Activated T-helper 2 cell treated with anti-CD3 and anti-CD28 coated beads, Interferon-gamma antibody, Interleukin-2, Interleukin-4, amounts not matched to agents 10 μg/mL and 5 μg/mL and 100 μg/mL, durations not matched to agents 14 hours and 24 hours and 36 hours (primary cell): ENCODE measurements at regions of chr9 and their contacts with region 1.

Region 1: GRCh38 chr9:77456829-77457437 is 191.2 kb downstream of the GNA14 start:
- DNase-seq: peak; percentile 73
- H3K4me3 Mint-ChIP-seq: no peak overlapping the region
- H3K27ac Mint-ChIP-seq: no peak overlapping the region
- H3K4me1 Mint-ChIP-seq: peaks cover 17% of the 10 kb centered on the region
- H3K27me3 Mint-ChIP-seq: no peaks in the 10 kb centered on the region

Region 2: GRCh38 chr9:77427256-77427927 is 29.5 kb before region 1 on chr9:
- intact Hi-C with region 1: no loop called
- DNase-seq: no peak
- H3K4me3 Mint-ChIP-seq: no peak overlapping the region
- H3K27ac Mint-ChIP-seq: no peak overlapping the region
- H3K4me1 Mint-ChIP-seq: no peaks in the 10 kb centered on the region
- H3K27me3 Mint-ChIP-seq: no peaks in the 10 kb centered on the region

Region 3: DNA sequence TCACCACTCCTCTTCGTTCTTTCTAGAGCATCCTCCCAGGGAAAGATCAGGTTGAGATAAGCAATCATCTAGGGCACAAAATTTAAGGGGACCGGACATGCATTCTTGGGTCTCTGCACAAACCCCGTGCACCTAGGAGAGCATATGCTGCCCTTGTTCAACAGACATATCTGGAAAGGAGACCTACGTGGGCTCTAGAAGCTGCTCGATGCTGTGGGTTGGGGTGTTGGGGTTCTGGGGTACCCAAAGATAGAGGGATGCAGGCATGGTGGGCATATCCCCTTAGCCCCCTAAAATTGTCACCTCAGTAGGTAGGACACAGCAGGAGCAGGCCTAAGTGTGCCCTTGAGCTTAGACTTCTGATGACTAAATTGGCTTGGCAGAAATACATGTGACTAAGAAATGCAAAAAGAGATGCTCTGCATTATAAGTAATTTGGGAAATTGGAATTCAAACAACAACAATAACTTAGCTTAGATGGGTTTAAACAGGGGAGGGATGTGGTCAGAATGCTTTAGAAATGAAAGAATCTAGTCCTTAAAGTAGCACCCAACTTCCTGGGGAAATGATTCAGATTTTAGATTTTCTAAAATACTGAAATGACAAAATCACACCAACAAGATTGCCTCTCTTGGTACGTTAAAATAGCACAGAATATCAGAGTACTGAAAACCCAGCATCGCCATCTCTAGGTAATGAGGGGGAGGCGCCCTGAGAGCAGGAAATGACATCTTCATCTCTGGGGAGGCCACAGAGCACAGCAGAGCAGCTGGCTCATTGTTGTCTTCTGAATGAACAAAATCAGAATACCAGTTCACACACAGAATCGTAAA is 18.9 kb after region 1 on chr9:
- intact Hi-C with region 1: loop called (anchors 1 kb)
- DNase-seq: peak; percentile 63
- H3K4me3 Mint-ChIP-seq: peak overlapping the region; percentile 49
- H3K27ac Mint-ChIP-seq: peak overlapping the region; percentile 97
- H3K4me1 Mint-ChIP-seq: peaks cover 36% of the 10 kb centered on the region
- H3K27me3 Mint-ChIP-seq: no peaks in the 10 kb centered on the region

Region 4: GRCh38 chr9:77521091-77521490 is 64.2 kb after region 1 on chr9:
- intact Hi-C with region 1: no loop called
- DNase-seq: no peak
- H3K4me3 Mint-ChIP-seq: no peak overlapping the region
- H3K27ac Mint-ChIP-seq: no peak overlapping the region
- H3K4me1 Mint-ChIP-seq: no peaks in the 10 kb centered on the region
- H3K27me3 Mint-ChIP-seq: no peaks in the 10 kb centered on the region

Region 5: DNA sequence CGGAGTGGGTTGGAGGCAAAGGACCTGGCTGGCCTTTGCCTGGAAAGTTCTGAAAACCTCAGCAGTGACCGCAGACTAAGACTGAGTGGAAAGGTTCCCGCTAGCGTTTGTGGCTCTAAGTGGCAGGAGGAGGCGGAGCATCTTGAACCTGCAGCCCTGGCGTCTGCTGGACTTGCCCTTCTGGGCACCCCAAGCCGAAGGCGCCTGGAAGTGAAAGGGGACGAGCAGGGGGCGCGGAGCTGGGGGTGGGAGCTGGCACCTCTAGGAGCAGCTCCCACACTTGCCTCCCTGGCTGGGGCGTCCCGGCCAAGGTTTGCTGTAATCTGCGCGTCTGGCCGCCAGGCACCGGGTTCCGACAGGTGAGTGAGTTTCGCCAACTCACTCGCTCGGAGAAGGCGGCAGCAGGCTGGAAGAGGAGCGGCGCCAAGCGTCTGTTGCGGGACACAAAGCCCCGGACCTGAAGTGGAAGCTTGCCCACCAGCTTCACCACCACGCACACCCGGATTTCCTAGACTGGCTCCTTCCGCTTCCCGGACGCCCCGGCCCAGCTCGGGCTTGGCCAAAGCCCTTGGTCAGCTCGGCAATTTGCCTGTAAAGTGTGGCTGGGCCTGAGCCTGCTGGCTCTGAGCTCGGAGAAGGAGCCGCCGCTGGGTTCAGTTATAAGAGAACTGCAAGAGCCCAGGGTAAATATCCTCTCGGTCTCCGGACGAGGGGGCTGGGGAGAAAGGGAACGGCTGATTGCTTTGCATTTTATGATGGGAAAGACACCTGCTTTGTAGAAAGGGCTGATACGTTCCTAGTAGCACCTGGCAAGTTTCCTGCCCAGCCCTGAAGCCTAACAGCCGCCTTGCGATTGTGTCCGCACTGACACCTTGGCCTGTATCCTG is 191.5 kb after region 1 on chr9 and contains the start of gene GNA14:
- intact Hi-C with region 1: loop called (anchors 10 kb)
- DNase-seq: no peak
- H3K4me3 Mint-ChIP-seq: peak within 1 kb of the TSS; percentile 74
- H3K27ac Mint-ChIP-seq: no peak within 1 kb of the TSS
- H3K4me1 Mint-ChIP-seq: peaks cover 7% of the 10 kb centered on the region
- H3K27me3 Mint-ChIP-seq: peaks cover 52% of the 10 kb centered on the region
- total RNA-seq, gene GNA14: 0.09 TPM in 2 replicates

Region 6: GRCh38 chr9:77841739-77842386 is 384.9 kb after region 1 on chr9:
- intact Hi-C with region 1: loop called (anchors 10 kb)
- DNase-seq: no peak
- H3K4me3 Mint-ChIP-seq: no peak overlapping the region
- H3K27ac Mint-ChIP-seq: peak overlapping the region; percentile 42
- H3K4me1 Mint-ChIP-seq: peaks cover 37% of the 10 kb centered on the region
- H3K27me3 Mint-ChIP-seq: no peaks in the 10 kb centered on the region

Region 7: DNA sequence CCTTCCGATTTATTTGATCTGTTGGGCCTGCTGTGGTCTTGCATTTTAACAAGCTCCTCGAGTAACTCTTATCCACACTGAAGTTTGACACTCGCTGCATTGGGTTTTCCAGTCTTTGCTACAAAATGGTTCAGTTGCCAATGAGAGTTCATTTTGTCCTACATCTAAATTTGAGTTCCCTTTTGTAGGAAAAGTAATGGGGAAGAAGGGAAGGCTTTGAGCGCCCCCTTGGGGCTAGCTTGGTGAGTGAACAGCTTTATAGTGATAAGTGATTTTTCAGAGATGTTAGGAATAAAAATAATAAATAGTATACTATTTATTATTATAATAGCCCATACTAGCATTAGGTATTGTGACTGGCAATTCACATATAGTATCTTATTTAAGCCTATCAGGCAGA is 664.6 kb after region 1 on chr9:
- intact Hi-C with region 1: loop called (anchors 5 kb)
- DNase-seq: peak; percentile 37
- H3K4me3 Mint-ChIP-seq: no peak overlapping the region
- H3K27ac Mint-ChIP-seq: no peak overlapping the region
- H3K4me1 Mint-ChIP-seq: peaks cover 31% of the 10 kb centered on the region
- H3K27me3 Mint-ChIP-seq: peaks cover 13% of the 10 kb centered on the region